Heart right ventricle (tissue), 16 donors: ENCODE measurements at regions of chr2 and their contacts with region 1.

Region 1: DNA sequence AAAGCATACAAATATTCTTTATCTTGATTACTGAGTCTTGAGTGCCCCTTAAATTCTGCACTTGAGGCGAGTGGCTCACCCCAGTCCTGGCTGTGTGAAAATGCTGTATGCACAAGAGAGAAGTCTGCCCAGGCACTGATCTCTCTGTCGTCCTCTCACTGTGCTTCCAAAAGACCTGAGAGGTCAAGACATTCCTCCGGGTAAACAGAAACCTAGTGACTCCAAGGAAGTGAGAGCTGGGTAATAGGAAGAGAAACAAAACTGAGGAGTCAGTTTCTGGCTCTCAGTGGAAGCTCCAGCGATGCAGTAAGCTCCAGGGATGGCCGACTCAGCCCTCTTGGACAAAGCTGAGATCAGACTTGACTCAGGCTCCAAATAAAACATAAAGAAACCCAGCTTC is 70.9 kb downstream of the AAK1 start:
- DNase-seq: no peak
- ATAC-seq: peak in 4 of 8 donors; percentile 19 to 36 (median 24)
- H3K4me3 ChIP-seq: no peak overlapping the region
- H3K27ac ChIP-seq: peak overlapping the region in 4 of 10 donors; percentile 55 to 66 (median 56)
- H3K4me1 ChIP-seq: peaks cover 12 to 78% (median 60%) of the 10 kb centered on the region in 9 donors
- H3K27me3 ChIP-seq: no peaks in the 10 kb centered on the region
- CTCF ChIP-seq: no peak

Region 2: GRCh38 chr2:69619725-69620124 is 47.1 kb after region 1 on chr2:
- intact Hi-C with region 1: loop called in 1 of 10 experiments (anchors 10 kb)
- DNase-seq: no peak
- ATAC-seq: peak in 5 of 8 donors; percentile 21 to 51 (median 35)
- H3K4me3 ChIP-seq: no peak overlapping the region
- H3K27ac ChIP-seq: no peak overlapping the region
- H3K4me1 ChIP-seq: peaks cover 4 to 87% (median 51%) of the 10 kb centered on the region in 9 donors
- H3K27me3 ChIP-seq: no peaks in the 10 kb centered on the region
- CTCF ChIP-seq: no peak

Region 3: GRCh38 chr2:70173520-70173919 is 600.9 kb after region 1 on chr2:
- intact Hi-C with region 1: no loop called
- DNase-seq: no peak
- ATAC-seq: no peak
- H3K4me3 ChIP-seq: no peak overlapping the region
- H3K27ac ChIP-seq: no peak overlapping the region
- H3K4me1 ChIP-seq: no peaks in the 10 kb centered on the region
- H3K27me3 ChIP-seq: no peaks in the 10 kb centered on the region
- CTCF ChIP-seq: no peak